Psoas muscle (tissue), 8 donors: ENCODE measurements at regions of chr11 and their contacts with region 1.

Region 1: DNA sequence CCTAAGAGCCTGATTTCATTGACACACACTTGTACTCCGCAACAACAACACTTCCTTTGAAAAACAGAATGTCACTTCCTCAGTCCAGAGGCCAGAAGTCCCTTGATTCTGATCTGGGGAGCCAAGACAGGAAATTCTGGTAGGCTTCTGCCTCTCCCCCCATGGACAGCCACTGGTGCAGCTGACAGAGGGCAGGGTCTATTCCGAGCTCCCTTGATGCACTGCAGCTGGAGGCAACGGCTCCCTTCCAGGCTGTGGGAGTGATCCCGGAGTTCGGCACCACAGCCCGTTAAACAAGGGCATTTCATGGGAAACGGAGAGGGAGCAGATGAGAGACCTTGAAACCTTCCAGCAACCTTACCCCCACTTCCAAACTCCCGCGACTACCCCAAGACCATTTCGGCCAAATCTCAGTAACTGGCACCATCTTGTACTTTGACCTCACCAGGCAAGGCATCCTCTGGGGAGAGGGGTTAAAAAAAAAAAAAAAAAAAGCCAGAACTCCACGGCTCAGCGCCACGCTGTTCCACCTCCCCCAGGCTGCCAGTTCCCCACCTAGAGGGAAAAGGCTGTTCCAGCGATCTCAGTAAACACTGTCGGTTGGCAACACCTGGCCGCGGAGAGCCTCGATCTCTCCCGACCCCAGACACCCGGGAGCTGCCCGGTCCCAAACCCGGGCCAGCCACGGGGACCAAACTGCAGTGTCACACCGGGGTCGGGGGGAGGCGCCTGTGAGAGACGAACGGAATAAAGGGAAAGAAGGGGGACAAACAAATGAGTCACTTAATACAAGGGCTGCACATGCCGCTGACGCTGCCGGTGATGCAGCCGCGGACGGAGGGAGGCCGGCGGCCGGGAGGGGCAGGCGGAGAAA is 1.1 kb downstream of the GAB2 start:
- DNase-seq: peak; percentile 88 to 91
- ATAC-seq: peak; percentile 75 to 84 (median 78)
- H3K4me3 ChIP-seq: peak overlapping the region; percentile 81
- H3K27ac ChIP-seq: peak overlapping the region; percentile 86
- H3K4me1 ChIP-seq: peaks cover 18% of the 10 kb centered on the region
- H3K27me3 ChIP-seq: no peaks in the 10 kb centered on the region
- CTCF ChIP-seq: peak; percentile 36

Region 2: DNA sequence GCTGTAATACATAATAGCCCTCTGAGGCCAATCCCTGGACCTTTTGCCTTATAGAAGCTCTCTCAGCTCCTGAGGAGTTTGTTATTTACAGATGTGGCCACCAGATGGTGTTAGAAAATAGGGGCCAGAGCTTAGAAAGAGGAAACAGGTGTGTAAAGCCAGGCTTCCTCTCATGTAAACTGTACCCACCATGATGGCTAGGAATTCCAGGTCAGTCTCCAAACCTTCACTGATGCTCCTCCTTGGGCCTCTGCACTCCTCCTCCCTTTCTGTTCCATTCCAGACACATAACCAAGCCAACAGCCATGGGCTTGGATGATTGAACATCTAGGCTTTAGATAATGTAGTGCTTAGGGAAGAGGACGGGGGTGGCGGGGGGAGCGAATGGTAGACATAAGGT is 188.1 kb before region 1 on chr11:
- intact Hi-C with region 1: loop called (anchors 5 to 10 kb)
- DNase-seq: no peak
- ATAC-seq: peak in 3 of 4 donors; percentile 56 to 72 (median 57)
- H3K4me3 ChIP-seq: no peak overlapping the region
- H3K27ac ChIP-seq: no peak overlapping the region
- H3K4me1 ChIP-seq: peaks cover 12% of the 10 kb centered on the region
- H3K27me3 ChIP-seq: no peaks in the 10 kb centered on the region
- CTCF ChIP-seq: peak; percentile 55

Region 3: DNA sequence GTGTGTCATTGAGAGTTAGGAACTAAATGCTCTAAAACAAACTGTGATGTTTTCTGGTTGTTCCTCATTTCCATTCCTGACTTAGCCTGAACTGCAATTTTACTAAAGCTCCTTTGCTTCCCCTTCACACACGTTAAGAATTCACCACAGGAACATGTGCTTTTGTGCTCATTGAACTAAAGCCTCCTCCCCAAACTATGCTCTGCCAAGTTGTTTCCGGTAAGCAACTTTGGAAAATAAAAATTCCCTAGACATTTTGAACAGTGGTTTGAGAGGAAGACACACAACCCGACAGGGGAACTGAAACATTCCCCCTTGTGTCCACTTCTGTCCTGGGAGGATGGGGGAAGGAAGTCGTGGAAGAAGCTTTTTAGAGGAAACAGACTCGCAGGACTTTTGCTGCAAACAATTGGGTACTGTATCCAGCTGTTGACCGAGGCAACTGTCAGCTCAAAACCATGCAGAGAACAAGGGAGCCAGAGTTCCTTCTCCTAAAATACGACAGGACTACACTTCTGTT is 65.8 kb before region 1 on chr11:
- intact Hi-C with region 1: loop called in 1 of 2 experiments (anchors 10 kb)
- DNase-seq: no peak
- ATAC-seq: peak; percentile 21 to 72 (median 46)
- H3K4me3 ChIP-seq: peak overlapping the region; percentile 42
- H3K27ac ChIP-seq: peak overlapping the region; percentile 21
- H3K4me1 ChIP-seq: peaks cover 14% of the 10 kb centered on the region
- H3K27me3 ChIP-seq: no peaks in the 10 kb centered on the region
- CTCF ChIP-seq: no peak

Region 4: GRCh38 chr11:78453140-78453935 is 36.8 kb after region 1 on chr11:
- intact Hi-C with region 1: no loop called
- DNase-seq: no peak
- ATAC-seq: no peak
- H3K4me3 ChIP-seq: no peak overlapping the region
- H3K27ac ChIP-seq: no peak overlapping the region
- H3K4me1 ChIP-seq: no peaks in the 10 kb centered on the region
- H3K27me3 ChIP-seq: no peaks in the 10 kb centered on the region
- CTCF ChIP-seq: no peak

Region 5: GRCh38 chr11:78564490-78565467 is 148.2 kb after region 1 on chr11:
- intact Hi-C with region 1: loop called (anchors 5 kb)
- DNase-seq: no peak
- ATAC-seq: peak in 2 of 4 donors; percentile 58 to 82
- H3K4me3 ChIP-seq: no peak overlapping the region
- H3K27ac ChIP-seq: no peak overlapping the region
- H3K4me1 ChIP-seq: peaks cover 6% of the 10 kb centered on the region
- H3K27me3 ChIP-seq: no peaks in the 10 kb centered on the region
- CTCF ChIP-seq: peak; percentile 82